ENCODE measurements at regions of chr4 and their contacts with region 1.

Region 1: GRCh38 chr4:62709618-62710252 is 1509.6 kb downstream of the ADGRL3 start:
- DNase-seq: peak; percentile 91
- ATAC-seq: peak; percentile 67
- H3K4me3 ChIP-seq: peak overlapping the region; percentile 64
- H3K27ac ChIP-seq: no peak overlapping the region
- H3K4me1 ChIP-seq: peaks cover 23% of the 10 kb centered on the region
- H3K27me3 ChIP-seq: no peaks in the 10 kb centered on the region
- CTCF ChIP-seq: peak; percentile 93

Region 2: GRCh38 chr4:61741327-61742096 is 968.2 kb before region 1 on chr4:
- CTCF ChIA-PET with region 1: interaction called, 3 read pairs
- POLR2A ChIA-PET with region 1: no interaction called
- intact Hi-C with region 1: loop called (anchors 2 kb)
- DNase-seq: peak; percentile 75
- ATAC-seq: peak; percentile 81
- H3K4me3 ChIP-seq: no peak overlapping the region
- H3K27ac ChIP-seq: no peak overlapping the region
- H3K4me1 ChIP-seq: no peaks in the 10 kb centered on the region
- H3K27me3 ChIP-seq: no peaks in the 10 kb centered on the region
- CTCF ChIP-seq: peak; percentile 93

Region 3: GRCh38 chr4:62260254-62260653 is 449.5 kb before region 1 on chr4:
- CTCF ChIA-PET with region 1: no interaction called
- POLR2A ChIA-PET with region 1: no interaction called
- intact Hi-C with region 1: loop called (anchors 5 kb)
- DNase-seq: peak; percentile 86
- ATAC-seq: peak; percentile 95
- H3K4me3 ChIP-seq: peak overlapping the region; percentile 27; the same call in 1 of the 2 replicates
- H3K27ac ChIP-seq: peak overlapping the region; percentile 31
- H3K4me1 ChIP-seq: peaks cover 12% of the 10 kb centered on the region; the same call in 1 of the 2 replicates
- H3K27me3 ChIP-seq: no peaks in the 10 kb centered on the region
- CTCF ChIP-seq: no peak

Region 4: DNA sequence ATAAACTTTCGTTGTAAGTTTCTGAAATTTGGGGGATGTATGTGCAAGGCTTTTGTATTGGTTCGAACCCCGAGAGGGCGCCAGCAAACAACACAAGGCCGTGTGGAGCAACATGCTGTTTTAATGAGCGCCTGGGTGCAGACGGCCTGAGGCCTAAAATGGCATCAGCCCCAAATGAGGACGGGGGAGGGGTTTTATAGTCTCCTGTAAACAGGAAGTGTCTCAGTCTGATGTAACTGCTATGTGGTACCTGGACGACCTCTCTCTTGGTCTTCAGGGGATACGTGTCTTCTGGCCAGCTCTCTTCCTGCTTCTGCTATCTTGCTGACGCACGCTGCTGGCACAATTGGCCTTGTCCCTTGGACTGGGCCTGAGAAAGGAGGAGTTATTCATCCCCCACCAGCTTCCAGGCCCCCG is 161.6 kb before region 1 on chr4:
- CTCF ChIA-PET with region 1: no interaction called
- POLR2A ChIA-PET with region 1: no interaction called
- intact Hi-C with region 1: loop called (anchors 1 kb)
- DNase-seq: peak; percentile 98
- ATAC-seq: peak; percentile 90
- H3K4me3 ChIP-seq: no peak overlapping the region
- H3K27ac ChIP-seq: peak overlapping the region; percentile 92
- H3K4me1 ChIP-seq: peaks cover 34% of the 10 kb centered on the region
- H3K27me3 ChIP-seq: no peaks in the 10 kb centered on the region
- CTCF ChIP-seq: peak; percentile 83

Region 5: GRCh38 chr4:62644372-62644771 is 65.4 kb before region 1 on chr4:
- CTCF ChIA-PET with region 1: no interaction called
- POLR2A ChIA-PET with region 1: no interaction called
- intact Hi-C with region 1: loop called (anchors 5 kb)
- DNase-seq: peak; percentile 74
- ATAC-seq: peak; percentile 69
- H3K4me3 ChIP-seq: no peak overlapping the region
- H3K27ac ChIP-seq: no peak overlapping the region
- H3K4me1 ChIP-seq: peaks cover 15% of the 10 kb centered on the region
- H3K27me3 ChIP-seq: no peaks in the 10 kb centered on the region
- CTCF ChIP-seq: peak; percentile 77

Region 6: DNA sequence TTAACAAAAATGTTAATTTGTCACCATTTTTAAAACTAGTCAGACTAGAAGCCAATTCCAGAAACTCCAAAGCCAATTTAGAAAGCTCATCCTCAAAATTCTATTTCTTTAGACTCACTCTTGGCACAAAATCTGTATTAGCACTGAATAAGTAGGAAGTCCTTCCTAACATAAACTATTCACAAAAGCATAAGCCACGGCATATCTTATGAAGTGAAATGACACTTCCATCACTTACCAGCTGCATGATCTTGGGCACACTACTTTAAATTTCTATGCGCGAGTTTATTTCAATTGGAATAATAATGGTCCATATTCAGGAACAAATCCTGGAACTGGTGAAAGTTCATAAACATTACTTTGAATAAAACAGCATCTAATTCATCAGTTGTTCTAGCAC is 155.5 kb after region 1 on chr4:
- CTCF ChIA-PET with region 1: no interaction called
- POLR2A ChIA-PET with region 1: no interaction called
- intact Hi-C with region 1: no loop called
- DNase-seq: no peak
- ATAC-seq: no peak
- H3K4me3 ChIP-seq: no peak overlapping the region
- H3K27ac ChIP-seq: no peak overlapping the region
- H3K4me1 ChIP-seq: no peaks in the 10 kb centered on the region
- H3K27me3 ChIP-seq: no peaks in the 10 kb centered on the region
- CTCF ChIP-seq: no peak

Region 7: GRCh38 chr4:62940229-62940628 is 230.5 kb after region 1 on chr4:
- CTCF ChIA-PET with region 1: no interaction called
- POLR2A ChIA-PET with region 1: no interaction called
- intact Hi-C with region 1: no loop called
- DNase-seq: peak; percentile 13
- ATAC-seq: peak; percentile 24; the same call in 1 of the 2 replicates
- H3K4me3 ChIP-seq: no peak overlapping the region
- H3K27ac ChIP-seq: no peak overlapping the region
- H3K4me1 ChIP-seq: no peaks in the 10 kb centered on the region
- H3K27me3 ChIP-seq: no peaks in the 10 kb centered on the region
- CTCF ChIP-seq: no peak

Region 8: DNA sequence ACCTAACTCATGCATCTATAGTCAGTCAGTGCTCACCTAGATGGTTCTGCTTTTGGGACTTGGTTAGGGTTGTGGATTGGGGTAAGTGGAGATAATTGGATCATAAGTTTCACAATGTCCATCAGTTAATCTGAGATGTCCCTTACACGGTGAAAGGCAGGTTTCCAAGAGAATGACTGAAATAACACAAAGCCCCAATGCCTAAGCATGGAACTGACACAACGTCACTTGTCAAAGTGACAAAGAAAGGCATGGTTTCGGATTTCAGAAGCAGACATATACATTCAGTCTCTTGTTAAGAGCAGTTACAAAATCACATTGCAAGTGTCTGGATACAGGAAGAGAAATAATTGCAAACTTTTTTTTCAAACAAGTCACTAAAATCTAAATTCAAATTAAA is 242.6 kb after region 1 on chr4:
- CTCF ChIA-PET with region 1: no interaction called
- POLR2A ChIA-PET with region 1: no interaction called
- intact Hi-C with region 1: no loop called
- DNase-seq: no peak
- ATAC-seq: no peak; the same call in 1 of the 2 replicates
- H3K4me3 ChIP-seq: no peak overlapping the region
- H3K27ac ChIP-seq: no peak overlapping the region
- H3K4me1 ChIP-seq: peaks cover 4% of the 10 kb centered on the region; the same call in 1 of the 2 replicates
- H3K27me3 ChIP-seq: no peaks in the 10 kb centered on the region
- CTCF ChIP-seq: no peak

Region 9: DNA sequence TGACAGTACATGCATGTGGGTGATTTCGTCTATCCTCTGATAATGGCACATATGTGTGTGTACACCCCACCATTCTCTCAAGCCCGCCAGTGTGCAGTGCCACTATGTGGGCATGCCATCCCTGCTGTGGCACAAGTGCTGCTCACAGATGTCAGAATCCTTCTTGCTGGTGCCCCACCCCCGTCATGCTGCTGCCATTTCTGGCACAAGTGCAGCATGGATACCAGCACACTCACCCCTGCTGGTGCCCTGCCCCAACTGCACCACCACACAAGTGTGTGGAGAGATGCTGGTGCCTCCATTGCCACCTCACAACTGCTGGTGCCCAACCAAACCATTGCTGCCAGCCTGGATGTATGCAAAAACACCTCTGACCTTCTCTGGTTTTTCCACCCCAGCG is 565.8 kb after region 1 on chr4:
- CTCF ChIA-PET with region 1: no interaction called
- POLR2A ChIA-PET with region 1: no interaction called
- intact Hi-C with region 1: loop called (anchors 5 kb)
- DNase-seq: no peak
- ATAC-seq: no peak
- H3K4me3 ChIP-seq: no peak overlapping the region
- H3K27ac ChIP-seq: no peak overlapping the region
- H3K4me1 ChIP-seq: no peaks in the 10 kb centered on the region
- H3K27me3 ChIP-seq: no peaks in the 10 kb centered on the region
- CTCF ChIP-seq: no peak